ENCODE measurements at regions of chr12 and their contacts with region 1.

Region 1: GRCh38 chr12:56724972-56725722 is at the start of gene NACA:
- DNase-seq: peak; percentile 99
- ATAC-seq: peak; percentile 97
- total RNA-seq, gene NACA: 449 TPM

Region 2: DNA sequence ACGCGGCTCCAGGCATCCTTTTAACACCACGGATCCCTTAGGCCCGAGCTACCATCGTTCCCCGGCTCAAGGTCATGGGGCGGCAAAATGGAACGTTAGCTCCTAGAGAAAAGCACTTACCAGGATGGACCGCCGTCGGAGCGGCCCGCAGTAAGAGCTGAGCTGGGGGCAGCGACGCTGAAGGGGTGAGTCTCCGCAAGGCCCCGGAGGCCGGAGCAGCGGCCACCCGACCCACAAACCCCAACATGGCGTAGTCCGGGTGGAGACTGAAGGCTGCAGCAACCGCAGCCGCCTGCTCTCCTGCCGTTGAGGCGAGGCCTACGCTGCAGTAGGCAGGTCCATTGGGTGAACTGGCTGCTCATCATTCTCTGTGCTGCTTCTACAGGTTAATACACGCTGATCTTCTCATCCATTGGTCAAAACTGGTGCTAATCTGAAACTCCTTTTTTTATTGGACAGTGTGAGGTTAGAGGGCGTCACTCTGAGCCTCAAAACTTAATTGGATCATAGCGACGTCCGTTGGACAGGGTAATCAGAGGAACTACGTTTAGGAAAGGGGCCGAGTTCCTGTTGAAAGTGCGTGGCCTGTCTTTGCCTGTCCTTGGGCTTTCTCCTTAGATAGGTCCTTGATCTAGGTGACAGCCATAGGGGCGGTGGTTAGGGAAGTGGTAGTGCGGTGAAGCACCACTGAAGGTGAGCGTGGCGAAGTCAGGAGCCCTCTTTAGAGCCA is 79.3 kb before region 1 on chr12 and contains the start of gene ATP5F1B:
- intact Hi-C with region 1: loop called (anchors 2 kb)
- DNase-seq: peak; percentile 97
- ATAC-seq: peak; percentile 98
- total RNA-seq, gene ATP5F1B: 3,077 TPM

Region 3: GRCh38 chr12:56688129-56688845 is 36.9 kb before region 1 on chr12 and contains the start of gene PTGES3:
- intact Hi-C with region 1: loop called (anchors 5 kb)
- DNase-seq: peak; percentile 99
- ATAC-seq: peak; percentile 96
- total RNA-seq, gene PTGES3: 132 TPM

Measured in Right ventricle myocardium superior (tissue), 1 donor.